BJ (cell line): ENCODE measurements at regions of chr14 and their contacts with region 1.

Region 1: GRCh38 chr14:96100161-96101029 is 61.2 kb downstream of the C14orf132 start:
- DNase-seq: no peak
- H3K4me3 ChIP-seq: no peak overlapping the region
- H3K27me3 ChIP-seq: no peaks in the 10 kb centered on the region
- CTCF ChIP-seq: peak; percentile 95

Region 2: GRCh38 chr14:95993768-95994592 is 106.4 kb before region 1 on chr14:
- CTCF ChIA-PET with region 1: interaction called, 194 read pairs
- POLR2A ChIA-PET with region 1: no interaction called
- DNase-seq: no peak
- H3K4me3 ChIP-seq: no peak overlapping the region
- H3K27me3 ChIP-seq: no peaks in the 10 kb centered on the region
- CTCF ChIP-seq: peak; percentile 78

Region 3: GRCh38 chr14:96001866-96002497 is 98.4 kb before region 1 on chr14:
- CTCF ChIA-PET with region 1: interaction called, 194 read pairs
- POLR2A ChIA-PET with region 1: no interaction called
- DNase-seq: no peak
- H3K4me3 ChIP-seq: no peak overlapping the region
- H3K27me3 ChIP-seq: peaks cover 2% of the 10 kb centered on the region; the same call in 1 of the 2 replicates
- CTCF ChIP-seq: no peak

Region 4: GRCh38 chr14:96011607-96012006 is 88.8 kb before region 1 on chr14:
- CTCF ChIA-PET with region 1: interaction called, 11 read pairs
- POLR2A ChIA-PET with region 1: no interaction called
- DNase-seq: no peak
- H3K4me3 ChIP-seq: no peak overlapping the region
- H3K27me3 ChIP-seq: no peaks in the 10 kb centered on the region
- CTCF ChIP-seq: no peak

Region 5: DNA sequence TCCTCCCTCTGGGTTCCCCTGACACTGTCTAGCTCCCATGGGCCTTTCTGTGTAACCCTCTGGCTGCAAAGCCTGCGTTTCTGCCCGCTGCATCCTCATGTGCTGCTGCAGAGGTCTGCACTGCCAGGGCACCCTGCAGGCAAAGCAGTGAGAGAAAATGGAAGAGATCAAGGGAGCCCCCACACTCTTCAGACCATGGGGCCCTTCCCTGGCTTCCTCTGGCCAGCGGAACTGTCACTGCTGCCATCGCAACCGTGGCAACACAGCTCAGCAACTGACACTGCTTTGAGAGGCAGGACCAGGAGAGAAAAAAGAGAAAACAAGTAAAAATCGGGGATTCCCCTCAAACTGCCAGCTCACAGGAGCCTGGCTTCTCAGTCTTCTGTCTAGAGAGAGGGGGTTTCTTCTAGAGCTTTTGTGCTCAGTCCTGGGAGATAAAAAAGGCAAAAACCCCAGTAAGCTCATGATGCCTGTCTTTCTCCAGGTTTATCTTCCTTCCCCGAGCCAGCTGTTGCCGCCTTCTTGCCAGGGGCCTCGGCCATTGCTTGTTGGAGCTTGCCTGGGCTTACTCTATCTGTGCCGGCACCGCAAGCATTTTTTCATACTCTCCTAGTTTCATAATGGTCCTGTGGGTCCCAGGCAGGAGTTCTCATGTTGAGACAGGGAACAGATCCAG is 22.3 kb before region 1 on chr14:
- CTCF ChIA-PET with region 1: no interaction called
- POLR2A ChIA-PET with region 1: no interaction called
- DNase-seq: no peak
- H3K4me3 ChIP-seq: no peak overlapping the region
- H3K27me3 ChIP-seq: no peaks in the 10 kb centered on the region
- CTCF ChIP-seq: no peak

Region 6: GRCh38 chr14:96176811-96177603 is 76.6 kb after region 1 on chr14:
- CTCF ChIA-PET with region 1: interaction called, 12 read pairs
- POLR2A ChIA-PET with region 1: no interaction called
- DNase-seq: peak; percentile 68
- H3K4me3 ChIP-seq: no peak overlapping the region
- H3K27me3 ChIP-seq: no peaks in the 10 kb centered on the region; the same call in 1 of the 2 replicates
- CTCF ChIP-seq: no peak

Region 7: GRCh38 chr14:96264853-96265252 is 164.5 kb after region 1 on chr14:
- CTCF ChIA-PET with region 1: interaction called, 17 read pairs
- POLR2A ChIA-PET with region 1: no interaction called
- DNase-seq: no peak
- H3K4me3 ChIP-seq: no peak overlapping the region
- H3K27me3 ChIP-seq: no peaks in the 10 kb centered on the region
- CTCF ChIP-seq: peak; percentile 61

Region 8: DNA sequence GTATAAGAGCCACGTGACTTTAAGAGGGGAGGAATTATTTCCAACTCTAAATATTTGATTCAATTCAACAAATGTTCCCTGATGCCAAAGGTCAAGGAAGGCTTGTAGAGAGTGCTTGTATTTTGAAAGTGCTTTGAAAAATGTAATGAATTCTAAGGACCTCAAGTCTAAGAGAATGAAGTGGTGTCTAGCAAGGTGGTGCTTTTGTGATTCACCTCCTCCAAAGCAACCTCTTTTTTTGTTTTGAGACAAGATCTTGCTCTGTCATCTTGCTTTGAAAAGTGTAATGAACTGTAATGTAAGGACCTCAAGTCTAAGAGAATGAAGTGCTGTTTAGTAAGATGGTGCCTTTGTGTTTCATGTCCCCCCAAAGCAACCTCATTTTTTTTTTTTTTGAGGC is 305.3 kb after region 1 on chr14:
- CTCF ChIA-PET with region 1: no interaction called
- POLR2A ChIA-PET with region 1: no interaction called
- DNase-seq: no peak
- H3K4me3 ChIP-seq: no peak overlapping the region
- H3K27me3 ChIP-seq: peaks cover 3% of the 10 kb centered on the region; the same call in 1 of the 2 replicates
- CTCF ChIP-seq: no peak